ENCODE measurements at regions of chr4 and their contacts with region 1.

Region 1: GRCh38 chr4:83034630-83035494 is at the start of gene COPS4:
- DNase-seq: peak; percentile 99
- H3K4me3 ChIP-seq: peak within 1 kb of the TSS; percentile 71 to 80 (median 74)
- H3K27ac ChIP-seq: peak within 1 kb of the TSS; percentile 89 to 93 (median 91)
- H3K4me1 ChIP-seq: peaks cover 0 to 29% (median 20%) of the 10 kb centered on the region in 4 donors
- H3K27me3 ChIP-seq: no peaks in the 10 kb centered on the region
- CTCF ChIP-seq: peak; percentile 41 to 54 (median 50)
- EP300 ChIP-seq: peak in 2 of 4 donors; percentile 18 to 22
- POLR2A ChIP-seq: peak; percentile 33 to 69
- total RNA-seq, gene COPS4: 33.0 to 64.6 (median 53.8) TPM

Region 2: DNA sequence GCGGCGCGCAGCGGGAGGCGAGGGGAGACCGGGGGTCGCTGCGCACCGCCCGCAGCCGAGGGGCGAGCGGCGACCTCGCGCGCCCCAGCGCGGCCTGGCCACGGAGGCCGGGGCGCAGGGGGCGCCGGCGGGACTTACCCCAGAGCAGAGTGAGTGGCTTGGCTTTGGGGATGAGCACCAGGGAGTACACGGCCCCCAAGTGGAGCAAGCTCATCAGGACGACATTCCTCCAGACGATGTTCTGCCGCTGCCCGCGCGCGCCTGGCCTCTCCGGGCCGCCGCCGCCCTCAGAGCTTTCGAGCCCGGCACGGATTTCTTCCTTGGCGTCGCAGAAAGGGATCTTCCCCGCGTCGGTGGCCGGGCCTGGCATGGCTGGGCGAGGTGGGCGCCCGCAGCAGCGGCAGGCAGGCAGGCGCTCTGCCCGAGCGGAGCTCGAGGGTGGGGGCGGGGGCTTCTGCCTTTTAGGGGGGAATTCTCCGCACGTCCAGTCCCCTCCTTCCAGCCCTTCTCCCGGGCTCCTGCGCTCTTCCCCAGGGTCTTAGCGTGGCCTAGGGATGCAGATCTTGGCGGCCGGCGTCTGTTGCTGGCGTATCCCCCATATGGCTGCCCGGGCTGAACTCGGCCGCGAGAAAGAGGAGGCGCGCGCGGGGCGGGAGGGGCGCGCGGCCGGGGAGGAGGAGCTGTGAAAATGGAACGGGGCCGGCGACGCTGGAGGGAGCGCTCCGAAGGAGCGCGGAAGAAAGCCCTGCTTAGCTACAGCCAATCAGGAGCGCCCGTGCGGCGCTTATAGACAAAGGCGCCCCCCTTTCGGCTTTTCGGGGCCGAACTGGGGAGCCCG is 236.5 kb before region 1 on chr4 and contains the start of gene SCD5:
- intact Hi-C with region 1: loop called (anchors 10 kb)
- DNase-seq: peak; percentile 91
- H3K4me3 ChIP-seq: peak within 1 kb of the TSS; percentile 78 to 93 (median 84)
- H3K27ac ChIP-seq: peak within 1 kb of the TSS; percentile 81 to 86 (median 82)
- H3K4me1 ChIP-seq: peaks cover 0 to 22% (median 16%) of the 10 kb centered on the region in 4 donors
- H3K27me3 ChIP-seq: no peaks in the 10 kb centered on the region
- CTCF ChIP-seq: no peak
- EP300 ChIP-seq: no peak
- POLR2A ChIP-seq: no peak
- total RNA-seq, gene SCD5: 27.3 to 30.7 (median 29.0) TPM

Region 3: DNA sequence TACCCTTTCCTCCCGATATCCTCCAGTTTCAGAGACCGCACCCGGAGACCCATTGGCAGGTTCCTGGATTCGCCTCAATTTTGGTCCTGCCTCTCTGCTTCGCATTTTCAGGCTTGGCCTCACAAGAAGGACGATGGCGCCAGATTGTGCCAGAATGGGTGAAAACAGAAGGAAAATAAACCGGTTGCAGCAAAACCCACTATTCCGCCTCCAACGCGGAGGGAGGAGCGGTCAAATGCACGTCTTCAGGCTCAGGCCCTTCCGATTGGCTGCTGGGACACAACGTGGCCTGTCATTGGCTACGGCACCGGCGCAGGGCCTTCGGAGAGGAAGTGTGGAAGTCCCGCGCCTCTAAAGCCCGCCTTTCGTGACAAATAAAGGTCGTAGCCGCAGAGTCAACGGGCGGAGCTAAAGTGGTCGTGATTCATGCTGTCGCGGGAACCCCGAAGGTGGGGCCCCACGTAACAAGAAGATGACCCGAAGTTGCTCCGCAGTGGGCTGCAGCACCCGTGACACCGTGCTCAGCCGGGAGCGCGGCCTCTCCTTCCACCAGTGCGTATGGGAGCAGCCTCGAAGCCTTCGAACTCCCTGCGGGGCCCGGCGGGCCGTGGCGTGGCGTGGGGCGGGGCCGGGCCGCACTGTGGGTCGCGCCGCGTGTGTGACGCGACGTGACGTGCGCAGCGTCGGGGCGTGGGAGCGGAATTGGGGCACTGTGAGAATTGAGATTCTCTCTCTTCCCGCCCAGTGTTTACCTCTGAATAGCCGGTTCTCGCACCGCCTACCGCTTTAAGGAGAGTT is 134.3 kb before region 1 on chr4 and contains the start of gene THAP9:
- intact Hi-C with region 1: loop called (anchors 5 kb)
- DNase-seq: peak; percentile 100
- H3K4me3 ChIP-seq: peak within 1 kb of the TSS; percentile 54 to 82 (median 74)
- H3K27ac ChIP-seq: peak within 1 kb of the TSS; percentile 94 to 98 (median 98)
- H3K4me1 ChIP-seq: peaks cover 0 to 37% (median 34%) of the 10 kb centered on the region in 4 donors
- H3K27me3 ChIP-seq: no peaks in the 10 kb centered on the region
- CTCF ChIP-seq: no peak
- EP300 ChIP-seq: peak in 2 of 4 donors; percentile 5 to 13
- POLR2A ChIP-seq: peak; percentile 86 to 88
- total RNA-seq, gene THAP9: 3.9 to 7.5 (median 5.3) TPM

Region 4: GRCh38 chr4:83012687-83013419 is 22.0 kb before region 1 on chr4:
- intact Hi-C with region 1: loop called (anchors 1 kb)
- DNase-seq: peak; percentile 99
- H3K4me3 ChIP-seq: peak overlapping the region; percentile 45 to 87 (median 68)
- H3K27ac ChIP-seq: peak overlapping the region; percentile 88 to 97 (median 89)
- H3K4me1 ChIP-seq: peaks cover 0 to 37% (median 33%) of the 10 kb centered on the region in 4 donors
- H3K27me3 ChIP-seq: no peaks in the 10 kb centered on the region
- CTCF ChIP-seq: peak in 3 of 4 experiments; percentile 47 to 62 (median 59)
- EP300 ChIP-seq: peak in 1 of 4 donors; percentile 69
- POLR2A ChIP-seq: peak; percentile 28 to 46

Region 5: DNA sequence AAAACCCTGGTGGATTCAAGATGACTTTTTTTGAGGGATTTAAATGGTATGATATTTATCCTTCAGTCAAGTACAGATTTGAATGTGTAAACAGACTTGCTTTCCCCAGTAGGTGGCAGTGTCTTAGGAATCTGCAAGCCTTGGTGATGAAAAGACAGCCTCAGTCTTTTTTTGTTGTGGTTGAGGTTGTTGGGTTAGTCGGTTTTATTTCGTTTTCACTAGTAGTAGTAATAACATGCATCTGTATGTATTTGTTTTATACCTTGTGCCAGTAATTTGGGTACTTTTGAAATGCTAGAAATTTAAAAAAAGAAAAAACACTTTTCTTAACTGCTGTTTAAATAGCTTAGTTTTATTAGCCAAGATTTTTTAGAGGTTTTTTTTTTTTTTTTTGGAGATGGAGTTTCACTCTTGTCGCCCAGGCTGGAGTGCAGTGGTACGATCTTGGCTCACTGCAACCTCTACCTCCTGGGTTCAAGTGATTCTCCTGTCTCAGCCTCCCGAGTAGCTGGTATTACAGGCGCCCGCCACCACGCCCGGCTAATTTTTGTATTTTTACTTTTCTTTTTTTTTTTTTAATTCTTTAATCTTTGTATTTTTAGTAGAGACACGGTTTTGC is 39.3 kb after region 1 on chr4:
- intact Hi-C with region 1: loop called (anchors 5 kb)
- DNase-seq: no peak
- H3K4me3 ChIP-seq: no peak overlapping the region
- H3K27ac ChIP-seq: peak overlapping the region in 3 of 4 donors; percentile 58 to 79 (median 66)
- H3K4me1 ChIP-seq: peaks cover 0 to 30% (median 25%) of the 10 kb centered on the region in 4 donors
- H3K27me3 ChIP-seq: no peaks in the 10 kb centered on the region
- CTCF ChIP-seq: peak in 3 of 4 experiments; percentile 46 to 58 (median 52)
- EP300 ChIP-seq: no peak
- POLR2A ChIP-seq: no peak

Measured in sigmoid colon (tissue), 7 donors.